ENCODE measurements at regions of chr17 and their contacts with region 1.

Region 1: GRCh38 chr17:11997147-11997846 is at the start of gene ZNF18:
- DNase-seq: peak; percentile 97 to 99 (median 98)
- ATAC-seq: peak; percentile 99 to 100 (median 100)
- H3K4me3 ChIP-seq: peak within 1 kb of the TSS; percentile 63 to 97 (median 89)
- H3K27ac ChIP-seq: peak within 1 kb of the TSS; percentile 51 to 96 (median 90)
- H3K4me1 ChIP-seq: peaks cover 0 to 19% (median 9%) of the 10 kb centered on the region in 12 donors
- H3K27me3 ChIP-seq: no peaks in the 10 kb centered on the region
- CTCF ChIP-seq: peak in 4 of 12 donors; percentile 13 to 32 (median 24)
- POLR2A ChIP-seq: peak; percentile 55 to 98
- total RNA-seq, gene ZNF18: 3.8 to 5.6 (median 4.4) TPM

Region 2: DNA sequence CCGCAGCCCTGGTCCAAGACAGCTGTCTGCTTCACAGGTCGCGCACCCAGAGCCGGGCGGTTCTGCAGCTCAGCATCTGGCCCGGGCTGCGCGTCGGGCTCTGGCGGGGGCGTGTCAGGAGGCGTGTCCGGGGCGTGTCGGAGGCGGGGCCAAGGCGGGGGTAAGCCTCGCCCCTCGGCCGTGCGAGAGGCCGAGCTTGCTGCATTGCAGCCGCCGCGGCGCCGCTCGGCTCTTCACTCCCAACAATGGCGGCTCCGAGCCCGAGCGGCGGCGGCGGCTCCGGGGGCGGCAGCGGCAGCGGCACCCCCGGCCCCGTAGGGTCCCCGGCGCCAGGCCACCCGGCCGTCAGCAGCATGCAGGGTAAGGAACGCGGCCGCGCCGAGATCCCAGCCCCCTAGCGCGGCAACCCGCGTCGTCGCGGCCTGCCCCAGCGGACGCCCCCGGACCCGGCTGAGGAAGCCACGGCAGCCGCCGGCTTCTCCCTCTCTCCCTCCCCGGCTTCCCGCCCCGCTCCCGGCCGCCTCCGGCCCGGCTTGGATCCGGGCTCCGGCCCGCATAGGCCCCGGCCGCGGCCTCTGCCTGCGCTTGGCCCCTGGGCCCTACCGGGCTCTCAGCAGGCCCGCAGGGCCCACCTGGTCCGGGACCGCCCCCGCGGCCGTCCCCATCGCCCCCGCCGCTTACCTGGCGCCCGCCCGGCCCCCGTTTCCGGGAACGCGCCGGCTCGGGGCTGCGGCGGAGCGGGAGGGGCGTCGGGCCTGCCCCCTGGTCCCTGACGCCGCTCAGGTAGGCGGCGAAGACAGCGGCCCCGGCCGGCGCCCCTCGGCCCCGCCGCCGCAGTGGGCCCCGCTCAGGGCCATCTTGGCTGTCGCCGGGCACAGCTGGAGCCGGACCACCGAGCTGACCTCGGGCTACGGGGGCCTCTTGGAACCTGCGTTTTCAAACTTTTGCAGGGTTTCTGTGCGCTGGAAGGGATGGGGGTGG is 23.6 kb after region 1 on chr17 and contains the start of gene MAP2K4:
- intact Hi-C with region 1: loop called in 2 of 10 experiments (anchors 1 to 2 kb)
- DNase-seq: peak; percentile 93 to 98 (median 94)
- ATAC-seq: peak; percentile 99 to 100 (median 100)
- H3K4me3 ChIP-seq: peak within 1 kb of the TSS; percentile 65 to 98 (median 90)
- H3K27ac ChIP-seq: peak within 1 kb of the TSS; percentile 41 to 92 (median 86)
- H3K4me1 ChIP-seq: peaks cover 0 to 45% (median 26%) of the 10 kb centered on the region in 12 donors
- H3K27me3 ChIP-seq: peaks cover 0 to 4% (median 0%) of the 10 kb centered on the region in 9 donors
- CTCF ChIP-seq: no peak
- POLR2A ChIP-seq: peak; percentile 79 to 95
- total RNA-seq, gene MAP2K4: 18.8 to 37.5 (median 32.7) TPM

Measured in heart left ventricle (tissue), 16 donors.